ENCODE measurements at regions of chr11 and their contacts with region 1.

Region 1: DNA sequence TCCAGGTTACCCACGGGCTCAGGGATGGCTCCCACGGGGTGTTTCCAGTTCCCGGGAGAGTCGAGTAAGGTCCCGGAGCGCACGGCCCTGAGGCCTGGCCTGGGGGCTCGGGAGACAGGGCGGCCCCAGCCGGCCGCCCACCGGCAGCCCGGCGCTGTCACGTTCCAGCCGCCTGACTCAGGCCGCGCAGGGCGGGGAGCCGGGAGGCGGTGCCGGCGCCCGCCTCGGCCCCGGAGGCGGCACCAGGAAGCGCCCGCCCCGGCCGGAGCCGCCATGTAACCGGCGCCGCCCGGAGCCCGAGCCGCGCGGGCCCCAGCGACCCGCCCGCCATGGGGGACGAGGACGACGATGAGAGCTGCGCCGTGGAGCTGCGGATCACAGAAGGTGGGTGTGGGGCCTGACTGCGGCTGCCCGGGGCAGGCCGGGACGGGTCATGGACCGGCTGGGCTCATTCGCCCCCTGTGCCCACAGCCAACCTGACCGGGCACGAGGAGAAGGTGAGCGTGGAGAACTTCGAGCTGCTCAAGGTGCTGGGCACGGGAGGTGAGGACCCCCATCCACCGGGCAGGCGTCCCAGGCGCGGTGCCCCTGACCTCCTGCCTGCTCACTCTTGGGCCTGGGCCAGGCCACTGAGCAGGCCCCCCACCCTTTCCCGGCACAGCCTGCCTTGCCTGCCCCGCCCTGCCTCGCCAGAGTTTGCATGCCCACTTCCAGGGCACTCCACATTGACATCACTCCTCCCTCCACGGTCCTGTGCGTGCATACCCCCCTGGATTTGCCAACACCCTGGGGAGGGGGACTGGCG is at the start of gene RPS6KA4:
- DNase-seq: peak; percentile 55
- ATAC-seq: peak; percentile 72
- H3K4me3 Mint-ChIP-seq: peak within 1 kb of the TSS; percentile 82
- H3K27ac Mint-ChIP-seq: peak within 1 kb of the TSS; percentile 53
- H3K4me1 Mint-ChIP-seq: peaks cover 47% of the 10 kb centered on the region
- H3K27me3 Mint-ChIP-seq: no peaks in the 10 kb centered on the region
- CTCF ChIP-seq: no peak
- total RNA-seq, gene RPS6KA4: 18.0 and 22.6 TPM in 2 replicates

Region 2: GRCh38 chr11:64246871-64247728 is 112.0 kb before region 1 on chr11 and contains the start of gene PPP1R14B:
- CTCF ChIA-PET with region 1: interaction called, 6 read pairs
- POLR2A ChIA-PET with region 1: no interaction called
- intact Hi-C with region 1: loop called (anchors 1 kb)
- DNase-seq: peak; percentile 78
- ATAC-seq: peak; percentile 63
- H3K4me3 Mint-ChIP-seq: peak within 1 kb of the TSS; percentile 90
- H3K27ac Mint-ChIP-seq: peak within 1 kb of the TSS; percentile 87
- H3K4me1 Mint-ChIP-seq: peaks cover 43% of the 10 kb centered on the region
- H3K27me3 Mint-ChIP-seq: no peaks in the 10 kb centered on the region
- CTCF ChIP-seq: no peak
- total RNA-seq, gene PPP1R14B: 112 and 127 TPM in 2 replicates

Region 3: GRCh38 chr11:64298966-64299846 is 59.9 kb before region 1 on chr11:
- CTCF ChIA-PET with region 1: interaction called, 14 read pairs
- POLR2A ChIA-PET with region 1: interaction called, 10 read pairs
- intact Hi-C with region 1: no loop called
- DNase-seq: peak; percentile 31
- ATAC-seq: no peak
- H3K4me3 Mint-ChIP-seq: peak overlapping the region; percentile 53
- H3K27ac Mint-ChIP-seq: no peak overlapping the region
- H3K4me1 Mint-ChIP-seq: peaks cover 26% of the 10 kb centered on the region
- H3K27me3 Mint-ChIP-seq: peaks cover 46% of the 10 kb centered on the region
- CTCF ChIP-seq: no peak

Region 4: GRCh38 chr11:64331557-64332371 is 27.3 kb before region 1 on chr11:
- CTCF ChIA-PET with region 1: interaction called, 15 read pairs
- POLR2A ChIA-PET with region 1: interaction called, 11 read pairs
- intact Hi-C with region 1: loop called (anchors 2 kb)
- DNase-seq: peak; percentile 52
- ATAC-seq: peak; percentile 32
- H3K4me3 Mint-ChIP-seq: peak overlapping the region; percentile 2
- H3K27ac Mint-ChIP-seq: peak overlapping the region; percentile 5
- H3K4me1 Mint-ChIP-seq: peaks cover 35% of the 10 kb centered on the region
- H3K27me3 Mint-ChIP-seq: no peaks in the 10 kb centered on the region
- CTCF ChIP-seq: no peak

Region 5: DNA sequence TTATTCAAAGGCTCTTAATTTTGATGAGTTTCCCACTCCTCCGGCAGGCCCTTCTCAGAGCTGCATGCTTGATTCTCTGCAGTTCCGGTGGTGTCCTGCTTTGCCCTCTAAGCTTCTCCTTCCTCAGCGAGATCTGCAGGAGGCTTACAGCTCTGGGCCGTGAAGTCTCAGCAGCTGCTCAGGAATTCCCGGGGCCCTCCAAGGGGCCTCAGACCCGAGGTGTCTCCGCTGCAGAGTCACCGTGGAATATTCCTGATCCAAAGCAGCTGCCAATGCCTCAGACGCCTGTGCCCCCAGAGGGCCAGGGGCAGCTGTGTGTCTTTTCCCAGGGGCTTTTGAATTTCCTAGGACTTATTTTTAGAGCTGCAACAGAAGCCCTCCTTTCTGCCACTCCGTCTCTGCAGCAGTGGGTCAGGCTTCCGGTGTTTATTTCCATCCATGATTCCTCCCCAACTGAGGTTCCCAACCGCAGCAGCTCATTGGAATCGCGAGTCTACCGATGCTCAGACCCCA is 37.0 kb after region 1 on chr11:
- CTCF ChIA-PET with region 1: no interaction called
- POLR2A ChIA-PET with region 1: no interaction called
- intact Hi-C with region 1: no loop called
- DNase-seq: no peak
- ATAC-seq: no peak
- H3K4me3 Mint-ChIP-seq: no peak overlapping the region
- H3K27ac Mint-ChIP-seq: no peak overlapping the region
- H3K4me1 Mint-ChIP-seq: peaks cover 6% of the 10 kb centered on the region
- H3K27me3 Mint-ChIP-seq: peaks cover 26% of the 10 kb centered on the region
- CTCF ChIP-seq: no peak

Region 6: DNA sequence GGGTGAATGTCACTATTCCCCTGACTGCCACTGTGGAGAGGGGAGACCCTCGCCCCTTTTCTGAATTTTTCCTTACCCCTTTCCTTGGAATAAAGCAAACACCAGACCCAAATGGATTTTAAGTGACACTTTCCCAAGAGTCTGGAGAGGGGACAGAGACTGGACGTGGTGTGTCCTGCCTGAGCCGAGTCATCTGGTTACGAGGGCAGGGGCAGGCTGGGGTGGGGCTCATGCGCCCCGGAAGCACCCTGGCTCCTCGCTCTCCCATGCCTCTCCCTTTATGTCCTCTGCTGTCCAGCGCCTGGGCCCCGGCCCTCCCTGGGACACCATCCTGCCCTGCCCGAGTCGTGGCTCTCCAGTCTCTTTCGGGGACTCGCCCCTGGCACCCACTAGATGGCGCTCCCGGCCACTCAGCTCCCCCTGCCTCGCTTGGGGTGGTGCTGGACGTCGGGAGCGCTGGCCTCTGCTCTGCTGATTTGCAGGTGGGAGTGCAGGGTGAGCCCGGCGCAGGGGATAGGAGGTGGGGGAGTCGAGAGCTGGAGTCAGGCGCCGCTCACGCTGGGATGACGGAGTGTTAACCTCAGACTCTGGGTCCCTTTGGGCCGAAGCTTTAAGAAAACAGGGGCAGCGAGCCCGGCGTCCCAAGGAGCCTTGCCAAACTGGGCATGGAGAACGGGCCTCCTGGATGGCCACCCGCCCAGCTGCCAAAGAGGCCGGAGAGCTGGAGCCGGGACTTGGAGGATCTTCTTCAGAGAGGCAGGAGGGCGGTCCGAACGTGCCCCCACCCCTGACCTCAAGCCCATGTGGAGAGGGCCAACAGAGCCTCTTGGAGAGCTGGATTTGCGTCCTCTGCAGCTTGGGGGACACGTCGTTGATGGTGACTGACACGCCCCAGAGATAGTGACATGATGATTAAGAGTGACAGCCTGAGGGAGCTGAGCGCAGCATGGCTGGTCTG is 89.8 kb after region 1 on chr11:
- CTCF ChIA-PET with region 1: interaction called, 8 read pairs
- POLR2A ChIA-PET with region 1: interaction called, 3 read pairs
- intact Hi-C with region 1: loop called (anchors 5 kb)
- DNase-seq: peak; percentile 71
- ATAC-seq: peak; percentile 59
- H3K4me3 Mint-ChIP-seq: peak overlapping the region; percentile 87
- H3K27ac Mint-ChIP-seq: peak overlapping the region; percentile 73
- H3K4me1 Mint-ChIP-seq: peaks cover 35% of the 10 kb centered on the region
- H3K27me3 Mint-ChIP-seq: peaks cover 2% of the 10 kb centered on the region
- CTCF ChIP-seq: no peak